GM12878 (cell line): ENCODE measurements at regions of chr1 and their contacts with region 1.

Region 1: GRCh38 chr1:204465546-204466415 is 28.8 kb downstream of the PIK3C2B start:
- DNase-seq: peak; percentile 63
- ATAC-seq: peak; percentile 84
- H3K4me3 ChIP-seq: no peak overlapping the region
- H3K27ac ChIP-seq: peak overlapping the region; percentile 88
- H3K4me1 ChIP-seq: peaks cover 60% of the 10 kb centered on the region
- H3K27me3 ChIP-seq: no peaks in the 10 kb centered on the region
- CTCF ChIP-seq: 0 out of 6 replicates have a peak, but pooled peaks of 1 of the 3 experiments have one; percentile 3
- EP300 ChIP-seq: no peak
- POLR2A ChIP-seq: 0 out of 2 replicates have a peak, but pooled peaks have one; percentile 16
- RAD21 ChIP-seq: no peak

Region 2: DNA sequence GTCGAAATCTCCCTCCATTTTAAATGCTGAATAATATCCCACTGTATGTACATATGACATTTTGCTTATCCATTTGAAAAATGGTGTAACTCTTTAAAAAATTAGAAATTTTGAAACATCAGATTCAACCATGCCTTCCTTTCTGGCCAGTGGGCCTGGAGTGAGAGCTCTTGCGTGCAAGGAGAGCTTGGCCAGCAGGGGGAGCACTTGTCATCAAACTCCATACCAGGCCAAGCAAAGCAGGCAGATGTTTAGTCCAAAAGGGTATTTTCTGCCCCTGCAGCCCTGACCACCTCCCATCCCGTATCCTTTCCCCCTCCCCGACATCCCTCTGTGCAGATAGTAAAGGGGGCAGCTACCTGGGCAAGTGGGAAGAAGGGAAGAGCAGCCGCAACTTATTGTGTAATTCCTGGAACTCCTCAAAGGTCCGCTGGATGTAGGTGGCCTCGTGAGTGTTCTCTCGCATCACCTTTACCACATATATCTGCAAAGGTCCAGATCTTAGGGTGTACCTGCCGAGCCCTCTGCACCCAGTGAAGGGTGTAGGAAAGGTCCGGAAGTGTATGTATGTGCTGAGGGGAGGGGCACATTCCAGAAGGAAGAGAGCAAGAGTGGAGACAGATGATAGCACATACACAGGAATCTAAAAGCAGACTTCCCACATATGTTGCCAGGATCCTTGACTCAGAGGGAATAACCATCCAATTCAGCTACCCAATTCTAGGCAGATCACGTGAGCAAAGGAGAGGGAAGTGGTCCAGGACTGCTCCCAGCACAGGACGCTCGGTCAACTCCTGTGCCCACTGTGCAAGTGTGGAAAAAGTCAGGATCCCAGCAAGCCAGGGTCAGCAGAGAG is 34.2 kb before region 1 on chr1:
- CTCF ChIA-PET with region 1: interaction called, 17 read pairs
- POLR2A ChIA-PET with region 1: no interaction called
- RAD21 ChIA-PET with region 1: no interaction called
- SMC1A ChIA-PET with region 1: no interaction called
- in situ Hi-C with region 1: no loop called
- intact Hi-C with region 1: no loop called
- DNase-seq: no peak
- ATAC-seq: peak; percentile 99
- H3K4me3 ChIP-seq: no peak overlapping the region
- H3K27ac ChIP-seq: no peak overlapping the region
- H3K4me1 ChIP-seq: no peaks in the 10 kb centered on the region
- H3K27me3 ChIP-seq: no peaks in the 10 kb centered on the region
- CTCF ChIP-seq: peak; percentile 86 to 95 (median 94)
- EP300 ChIP-seq: no peak
- POLR2A ChIP-seq: no peak
- RAD21 ChIP-seq: peak; percentile 60

Region 3: DNA sequence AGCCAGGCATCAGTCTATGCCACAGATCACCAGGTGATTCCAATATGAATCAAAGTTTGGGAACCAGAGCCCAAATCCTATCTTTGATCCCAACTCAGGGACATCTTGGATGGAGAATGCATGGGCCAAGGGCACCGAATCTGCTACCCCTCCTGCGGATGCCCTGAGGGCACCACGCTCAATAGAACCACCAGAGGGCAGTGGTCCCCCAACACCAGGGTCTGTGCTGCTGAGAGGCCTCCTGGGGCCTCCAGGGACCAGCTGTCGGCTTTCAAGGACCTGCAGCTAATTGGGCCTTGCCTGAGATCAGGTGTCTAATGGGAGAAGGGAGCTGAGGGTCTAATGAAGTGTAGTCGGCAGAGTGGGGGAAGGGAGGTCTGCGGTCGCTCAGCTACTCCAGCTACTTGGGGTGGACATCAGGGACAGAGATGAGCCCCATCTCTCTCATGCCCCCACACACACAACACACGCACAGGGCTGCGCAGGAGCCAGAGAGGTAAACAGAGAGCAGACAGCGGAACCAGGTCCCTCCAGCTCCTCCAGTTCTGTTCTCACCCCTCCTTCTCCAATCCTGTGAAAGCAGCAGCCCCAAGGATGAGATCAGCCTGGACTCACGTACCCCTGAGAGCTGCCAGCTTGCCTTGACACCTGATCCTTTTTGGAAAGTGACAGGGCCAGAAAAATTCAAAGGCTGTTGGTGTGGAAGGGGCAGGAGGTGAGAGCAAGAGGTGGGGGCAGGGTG is 19.2 kb before region 1 on chr1:
- CTCF ChIA-PET with region 1: interaction called, 35 read pairs
- POLR2A ChIA-PET with region 1: interaction called, 9 read pairs
- RAD21 ChIA-PET with region 1: interaction called, 21 read pairs
- SMC1A ChIA-PET with region 1: interaction called, 32 read pairs
- in situ Hi-C with region 1: no loop called
- intact Hi-C with region 1: loop called (anchors 2 kb)
- DNase-seq: no peak
- ATAC-seq: peak; percentile 98
- H3K4me3 ChIP-seq: no peak overlapping the region
- H3K27ac ChIP-seq: no peak overlapping the region
- H3K4me1 ChIP-seq: peaks cover 5% of the 10 kb centered on the region
- H3K27me3 ChIP-seq: no peaks in the 10 kb centered on the region
- CTCF ChIP-seq: peak; percentile 80 to 92 (median 89); a peak in 5 of 6 replicates
- EP300 ChIP-seq: no peak
- POLR2A ChIP-seq: no peak
- RAD21 ChIP-seq: peak; percentile 99

Region 4: GRCh38 chr1:204453141-204453772 is 12.5 kb before region 1 on chr1:
- CTCF ChIA-PET with region 1: interaction called, 35 read pairs
- POLR2A ChIA-PET with region 1: interaction called, 9 read pairs
- RAD21 ChIA-PET with region 1: interaction called, 13 read pairs
- SMC1A ChIA-PET with region 1: interaction called, 33 read pairs
- in situ Hi-C with region 1: no loop called
- intact Hi-C with region 1: no loop called
- DNase-seq: peak; percentile 84
- ATAC-seq: peak; percentile 97
- H3K4me3 ChIP-seq: 0 out of 2 replicates have a peak overlapping the region, but pooled peaks have one; percentile 9
- H3K27ac ChIP-seq: peak overlapping the region; percentile 81
- H3K4me1 ChIP-seq: peaks cover 17% of the 10 kb centered on the region
- H3K27me3 ChIP-seq: no peaks in the 10 kb centered on the region
- CTCF ChIP-seq: no peak
- EP300 ChIP-seq: no peak; a peak in 1 of 4 replicates
- POLR2A ChIP-seq: no peak
- RAD21 ChIP-seq: no peak

Region 5: DNA sequence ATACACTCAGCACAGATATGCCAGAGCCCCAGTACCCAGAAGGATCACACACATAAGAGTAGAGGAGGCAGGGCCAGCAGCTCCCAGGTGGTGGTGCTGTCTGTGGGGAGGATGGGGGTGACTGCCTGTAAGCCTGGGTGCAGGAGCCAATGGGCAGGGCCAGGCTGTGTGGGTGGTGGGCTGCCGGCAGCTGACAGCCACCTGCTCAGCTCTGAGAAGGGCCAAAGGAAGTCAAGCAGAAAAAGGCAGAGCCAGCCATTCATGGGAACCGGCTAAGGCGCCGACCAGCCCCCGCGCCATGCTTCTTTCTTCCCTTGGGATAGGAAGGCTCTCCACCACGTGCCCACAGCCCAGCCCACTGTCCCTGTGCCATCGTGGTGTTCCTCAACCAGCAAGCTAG is 14.7 kb after region 1 on chr1:
- CTCF ChIA-PET with region 1: interaction called, 2,021 read pairs
- POLR2A ChIA-PET with region 1: interaction called, 46 read pairs
- RAD21 ChIA-PET with region 1: interaction called, 38 read pairs
- SMC1A ChIA-PET with region 1: interaction called, 23 read pairs
- in situ Hi-C with region 1: no loop called
- intact Hi-C with region 1: no loop called
- DNase-seq: no peak
- ATAC-seq: peak; percentile 81
- H3K4me3 ChIP-seq: no peak overlapping the region
- H3K27ac ChIP-seq: peak overlapping the region; percentile 84
- H3K4me1 ChIP-seq: peaks cover 45% of the 10 kb centered on the region
- H3K27me3 ChIP-seq: no peaks in the 10 kb centered on the region
- CTCF ChIP-seq: peak; percentile 20 to 24 (median 23); a peak in 2 of 6 replicates
- EP300 ChIP-seq: no peak; a peak in 1 of 4 replicates
- POLR2A ChIP-seq: no peak
- RAD21 ChIP-seq: peak; percentile 39; the same call in 1 of the 2 replicates

Region 6: GRCh38 chr1:204487256-204487615 is 21.5 kb after region 1 on chr1:
- CTCF ChIA-PET with region 1: interaction called, 2,021 read pairs
- POLR2A ChIA-PET with region 1: interaction called, 46 read pairs
- RAD21 ChIA-PET with region 1: interaction called, 48 read pairs
- SMC1A ChIA-PET with region 1: interaction called, 91 read pairs
- in situ Hi-C with region 1: no loop called
- intact Hi-C with region 1: no loop called
- DNase-seq: no peak
- ATAC-seq: no peak
- H3K4me3 ChIP-seq: no peak overlapping the region
- H3K27ac ChIP-seq: no peak overlapping the region
- H3K4me1 ChIP-seq: peaks cover 11% of the 10 kb centered on the region
- H3K27me3 ChIP-seq: no peaks in the 10 kb centered on the region
- CTCF ChIP-seq: no peak
- EP300 ChIP-seq: no peak
- POLR2A ChIP-seq: no peak
- RAD21 ChIP-seq: no peak

Region 7: DNA sequence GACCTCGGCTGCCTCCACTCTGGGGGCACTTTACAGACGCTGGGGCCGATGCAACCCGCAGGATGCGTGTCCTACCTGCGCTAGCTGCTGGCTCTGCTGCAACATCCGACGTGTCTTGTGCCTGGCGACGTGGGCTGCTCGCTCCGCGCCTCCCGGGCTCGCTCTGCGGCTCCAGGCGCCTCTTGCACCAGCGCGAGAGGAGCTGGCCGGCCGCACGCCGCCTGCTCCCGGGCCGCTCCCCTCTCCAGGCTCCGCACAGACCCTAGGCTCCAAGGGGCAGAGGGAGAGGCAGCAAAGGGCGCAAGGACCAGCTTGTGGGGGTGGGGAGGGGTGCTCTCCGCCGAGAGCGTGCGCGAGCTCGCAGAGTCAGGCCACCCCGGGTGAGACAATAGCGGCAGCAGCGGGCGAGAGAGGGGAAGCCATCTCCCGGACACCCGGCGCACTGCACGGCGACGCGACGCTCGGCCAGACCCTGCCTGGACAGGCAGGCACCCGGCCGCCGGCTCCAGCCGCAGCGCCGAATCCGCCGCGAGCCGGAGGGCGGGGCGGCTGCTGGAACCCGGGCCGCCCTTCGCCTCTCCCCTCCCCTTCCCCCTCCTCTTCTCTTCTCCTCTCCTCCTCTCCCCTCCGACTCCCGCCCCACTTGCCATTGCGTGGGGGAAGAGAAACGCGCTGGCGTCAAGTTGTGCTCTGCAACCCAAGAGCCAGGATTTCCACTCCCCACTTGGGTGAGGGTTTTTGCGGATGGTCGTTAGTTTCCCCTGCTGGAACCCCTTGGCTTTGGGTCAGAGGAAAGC is 28.7 kb after region 1 on chr1 and contains the start of gene PIK3C2B:
- CTCF ChIA-PET with region 1: interaction called, 2,021 read pairs
- POLR2A ChIA-PET with region 1: interaction called, 8 read pairs
- RAD21 ChIA-PET with region 1: interaction called, 48 read pairs
- SMC1A ChIA-PET with region 1: interaction called, 91 read pairs
- in situ Hi-C with region 1: no loop called
- intact Hi-C with region 1: no loop called
- DNase-seq: peak; percentile 55
- ATAC-seq: peak; percentile 92
- H3K4me3 ChIP-seq: peak within 1 kb of the TSS; percentile 92
- H3K27ac ChIP-seq: peak within 1 kb of the TSS; percentile 86
- H3K4me1 ChIP-seq: peaks cover 22% of the 10 kb centered on the region
- H3K27me3 ChIP-seq: no peaks in the 10 kb centered on the region
- CTCF ChIP-seq: peak; percentile 37 to 59 (median 43)
- EP300 ChIP-seq: no peak
- POLR2A ChIP-seq: peak; percentile 86
- RAD21 ChIP-seq: peak; percentile 47
- polyA plus RNA-seq, gene PIK3C2B: 2.2 to 5.0 TPM

Region 8: GRCh38 chr1:204600968-204601367 is 135.2 kb after region 1 on chr1:
- CTCF ChIA-PET with region 1: no interaction called
- POLR2A ChIA-PET with region 1: no interaction called
- RAD21 ChIA-PET with region 1: no interaction called
- SMC1A ChIA-PET with region 1: no interaction called
- in situ Hi-C with region 1: no loop called
- intact Hi-C with region 1: no loop called
- DNase-seq: no peak
- ATAC-seq: no peak
- H3K4me3 ChIP-seq: no peak overlapping the region
- H3K27ac ChIP-seq: no peak overlapping the region
- H3K4me1 ChIP-seq: no peaks in the 10 kb centered on the region
- H3K27me3 ChIP-seq: no peaks in the 10 kb centered on the region
- CTCF ChIP-seq: peak in 1 of 3 experiments; percentile 25; a peak in 1 of 6 replicates
- EP300 ChIP-seq: no peak
- POLR2A ChIP-seq: no peak
- RAD21 ChIP-seq: no peak